Esophagus squamous epithelium (tissue), 5 donors: ENCODE measurements at regions of chr11 and their contacts with region 1.

Region 1: DNA sequence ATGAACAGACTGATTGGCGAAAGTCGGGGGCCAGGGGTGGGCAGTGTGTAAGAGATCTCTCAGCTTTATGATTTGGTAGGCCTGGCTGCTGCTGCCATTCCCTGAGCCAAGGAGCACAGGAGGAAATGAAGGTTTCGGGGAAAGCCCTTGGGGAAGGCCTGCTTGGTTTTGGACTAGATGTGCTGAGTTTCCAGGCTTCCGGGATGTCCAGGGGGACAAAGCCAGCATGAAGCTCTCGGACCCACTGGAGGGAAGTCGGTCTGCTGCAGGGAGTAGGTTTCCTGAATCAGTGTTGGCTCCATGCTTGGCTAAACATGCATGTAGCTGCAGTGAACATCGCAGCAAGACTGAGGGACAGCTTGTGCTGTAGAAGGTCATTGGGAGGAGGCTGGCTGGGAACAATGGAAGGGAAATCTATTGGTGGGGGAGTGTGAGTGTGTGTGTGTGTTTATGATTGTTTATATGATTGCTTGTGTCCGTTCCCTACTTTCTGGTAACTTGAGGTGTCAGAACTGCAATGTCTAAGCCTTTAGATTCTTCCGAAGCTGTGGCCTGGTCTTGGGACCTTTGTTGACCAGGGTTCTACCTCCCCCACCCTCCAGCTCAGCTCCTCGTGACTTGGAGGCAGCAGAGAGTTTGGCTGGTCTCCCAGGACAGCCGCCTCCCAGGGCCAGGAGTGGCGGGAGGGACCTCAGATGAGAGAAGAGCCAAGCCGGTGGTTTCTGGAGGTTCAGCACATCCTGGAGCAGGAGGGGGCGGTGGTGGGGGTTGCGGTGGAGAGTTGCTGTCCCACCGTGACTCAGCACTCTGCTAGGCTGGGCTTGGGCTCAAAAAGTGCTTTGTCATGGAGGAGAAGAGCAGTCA is 4.0 kb upstream of the FTH1 start:
- DNase-seq: peak; percentile 70
- H3K4me3 ChIP-seq: peak overlapping the region in 3 of 4 donors; percentile 16 to 49 (median 25)
- H3K27ac ChIP-seq: peak overlapping the region; percentile 81 to 98 (median 96)
- H3K4me1 ChIP-seq: peaks cover 40 to 89% (median 68%) of the 10 kb centered on the region in 3 donors
- H3K27me3 ChIP-seq: no peaks in the 10 kb centered on the region
- CTCF ChIP-seq: no peak
- POLR2A ChIP-seq: peak in 2 of 4 donors; percentile 52 to 56

Region 2: DNA sequence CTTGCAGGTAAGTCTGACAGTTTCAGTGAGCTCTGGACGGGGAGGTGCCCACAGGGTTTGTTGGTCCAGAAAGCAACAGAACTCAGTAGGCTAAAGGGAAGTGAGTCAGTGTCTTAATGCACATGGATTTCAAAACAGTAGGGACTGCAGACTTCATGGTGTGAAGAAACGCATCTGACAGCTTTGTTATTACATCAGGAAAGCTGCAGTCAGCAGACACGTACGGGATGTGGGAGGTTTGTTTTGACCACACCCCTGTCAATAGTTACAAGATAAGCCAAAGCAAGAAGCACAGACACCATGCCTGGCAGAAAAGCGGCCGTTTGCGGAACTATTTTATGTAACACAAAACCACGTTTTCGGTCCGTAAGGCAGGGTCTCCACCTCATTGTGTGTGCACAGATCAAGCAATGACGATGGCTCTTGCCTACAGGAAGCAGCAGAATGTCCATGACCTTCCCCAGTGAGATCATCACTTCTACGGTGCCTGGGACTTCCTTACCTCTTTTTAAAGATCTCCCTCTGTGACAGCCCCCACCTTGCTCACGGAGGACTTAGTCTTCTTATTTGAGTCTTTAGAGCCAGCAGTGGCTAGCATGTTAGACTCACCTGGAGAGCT is 54.1 kb after region 1 on chr11:
- intact Hi-C with region 1: loop called (anchors 10 kb)
- DNase-seq: peak; percentile 31
- H3K4me3 ChIP-seq: peak overlapping the region in 3 of 4 donors; percentile 12 to 45 (median 14)
- H3K27ac ChIP-seq: peak overlapping the region; percentile 69 to 90 (median 86)
- H3K4me1 ChIP-seq: peaks cover 16 to 31% (median 20%) of the 10 kb centered on the region in 3 donors
- H3K27me3 ChIP-seq: no peaks in the 10 kb centered on the region
- CTCF ChIP-seq: no peak
- POLR2A ChIP-seq: peak in 2 of 4 donors; percentile 9 to 55

Region 3: DNA sequence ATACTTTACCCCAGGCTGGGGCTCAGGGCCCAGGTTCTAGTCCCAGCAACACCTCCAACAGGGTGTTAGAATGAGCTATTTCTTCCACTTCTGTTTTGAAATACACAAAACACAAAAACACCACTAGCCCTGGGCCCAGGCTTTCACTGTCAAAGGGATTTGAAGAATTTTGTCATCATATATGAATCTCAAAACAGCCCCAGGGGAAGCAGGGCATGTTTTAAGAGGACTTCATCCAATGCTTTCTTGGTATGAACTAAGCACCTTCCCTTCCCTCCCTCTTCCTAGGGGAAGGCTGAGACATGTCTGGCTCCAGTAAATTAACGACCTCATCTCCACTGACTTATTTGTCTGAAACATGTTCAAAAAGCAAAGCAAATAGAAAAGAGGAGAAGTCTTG is 76.6 kb after region 1 on chr11:
- intact Hi-C with region 1: no loop called
- DNase-seq: no peak
- H3K4me3 ChIP-seq: no peak overlapping the region
- H3K27ac ChIP-seq: peak overlapping the region in 1 of 4 donors; percentile 42
- H3K4me1 ChIP-seq: peaks cover 4 to 74% (median 12%) of the 10 kb centered on the region in 3 donors
- H3K27me3 ChIP-seq: peaks cover 0 to 16% (median 0%) of the 10 kb centered on the region in 4 donors
- CTCF ChIP-seq: no peak
- POLR2A ChIP-seq: no peak